ENCODE measurements at regions of chr12 and their contacts with region 1.

Region 1: DNA sequence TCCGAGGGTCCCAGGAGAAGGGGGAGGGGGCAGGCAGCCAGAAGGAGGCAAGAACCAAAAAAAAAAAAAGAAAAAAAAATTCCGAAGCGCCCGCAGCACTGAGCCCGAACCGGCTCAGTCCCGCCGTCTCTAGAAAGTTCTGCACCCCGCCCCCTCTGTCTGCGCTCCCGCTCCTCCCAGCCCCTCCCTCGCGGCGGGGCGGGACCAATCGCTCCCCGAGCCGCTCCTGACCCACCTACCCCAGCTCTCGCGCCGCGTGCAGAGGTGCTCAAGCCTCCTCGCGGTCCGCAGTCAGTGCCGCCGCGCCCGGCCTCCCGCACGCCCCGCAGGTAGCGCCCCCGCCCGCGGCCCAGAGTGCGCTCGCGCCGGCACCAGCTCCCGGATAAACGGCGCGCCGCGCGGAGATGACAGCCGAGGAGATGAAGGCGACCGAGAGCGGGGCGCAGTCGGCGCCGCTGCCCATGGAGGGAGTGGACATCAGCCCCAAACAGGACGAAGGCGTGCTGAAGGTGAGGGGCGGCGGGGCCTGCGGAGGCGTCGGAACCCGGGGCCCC is at the start of gene FKBP4:
- DNase-seq: peak; percentile 71 to 93 (median 87)
- ATAC-seq: peak; percentile 82 to 89
- H3K4me3 Mint-ChIP-seq: peak within 1 kb of the TSS; percentile 84 to 96 (median 91)
- H3K27ac Mint-ChIP-seq: peak within 1 kb of the TSS in 9 of 10 donors; percentile 57 to 93 (median 88)
- H3K4me1 Mint-ChIP-seq: peaks cover 10 to 36% (median 20%) of the 10 kb centered on the region in 4 donors
- H3K27me3 Mint-ChIP-seq: no peaks in the 10 kb centered on the region
- polyA plus RNA-seq, gene FKBP4: 30.3 to 41.5 (median 33.9) TPM

Region 2: DNA sequence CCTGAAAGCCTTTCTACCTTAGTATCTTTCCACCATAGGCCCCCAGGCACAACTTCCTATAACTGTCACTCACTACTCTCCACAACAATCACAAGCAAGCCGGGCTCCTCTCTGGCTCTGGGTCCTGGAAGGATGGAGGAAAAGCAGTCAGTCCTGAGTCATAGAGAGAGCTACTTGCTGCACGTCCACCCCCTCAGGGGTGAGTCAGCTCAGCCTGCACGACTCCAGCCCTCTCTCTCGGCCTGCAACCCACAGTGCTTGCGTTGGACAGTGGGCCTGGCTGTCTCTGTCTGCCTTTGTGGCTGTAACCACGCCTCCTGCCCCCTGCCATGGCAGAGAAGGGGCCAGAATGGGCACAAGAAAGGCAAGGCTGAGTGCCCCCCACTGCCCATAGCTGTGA is 154.1 kb before region 1 on chr12:
- POLR2A ChIA-PET with region 1: no interaction called
- DNase-seq: no peak
- ATAC-seq: no peak
- H3K4me3 Mint-ChIP-seq: no peak overlapping the region
- H3K27ac Mint-ChIP-seq: peak overlapping the region in 1 of 10 donors; percentile 71
- H3K4me1 Mint-ChIP-seq: peaks cover 17 to 43% (median 25%) of the 10 kb centered on the region in 4 donors
- H3K27me3 Mint-ChIP-seq: peaks cover 6 to 33% (median 23%) of the 10 kb centered on the region in 5 donors

Region 3: DNA sequence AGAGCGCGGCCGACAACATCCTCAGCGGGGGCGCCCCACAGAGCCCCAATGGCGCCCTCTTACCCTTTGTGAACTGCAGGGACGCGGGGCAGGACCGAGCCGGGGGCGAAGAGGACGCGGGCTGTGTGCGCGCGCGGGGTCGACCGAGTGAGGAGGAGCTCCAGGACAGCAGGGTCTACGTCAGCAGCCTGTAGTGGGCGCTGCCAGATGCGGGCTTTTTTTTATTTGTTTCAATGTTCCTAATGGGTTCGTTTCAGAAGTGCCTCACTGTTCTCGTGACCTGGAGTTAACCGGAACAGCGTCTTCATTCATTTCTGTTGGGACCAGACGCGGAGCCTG is 103.8 kb before region 1 on chr12:
- POLR2A ChIA-PET with region 1: interaction called, 51 read pairs
- DNase-seq: peak; percentile 32 to 80 (median 60)
- ATAC-seq: peak; percentile 76 to 78
- H3K4me3 Mint-ChIP-seq: peak overlapping the region; percentile 86 to 99 (median 94)
- H3K27ac Mint-ChIP-seq: peak overlapping the region; percentile 81 to 94 (median 90)
- H3K4me1 Mint-ChIP-seq: peaks cover 36 to 55% (median 50%) of the 10 kb centered on the region in 4 donors
- H3K27me3 Mint-ChIP-seq: no peaks in the 10 kb centered on the region

Region 4: DNA sequence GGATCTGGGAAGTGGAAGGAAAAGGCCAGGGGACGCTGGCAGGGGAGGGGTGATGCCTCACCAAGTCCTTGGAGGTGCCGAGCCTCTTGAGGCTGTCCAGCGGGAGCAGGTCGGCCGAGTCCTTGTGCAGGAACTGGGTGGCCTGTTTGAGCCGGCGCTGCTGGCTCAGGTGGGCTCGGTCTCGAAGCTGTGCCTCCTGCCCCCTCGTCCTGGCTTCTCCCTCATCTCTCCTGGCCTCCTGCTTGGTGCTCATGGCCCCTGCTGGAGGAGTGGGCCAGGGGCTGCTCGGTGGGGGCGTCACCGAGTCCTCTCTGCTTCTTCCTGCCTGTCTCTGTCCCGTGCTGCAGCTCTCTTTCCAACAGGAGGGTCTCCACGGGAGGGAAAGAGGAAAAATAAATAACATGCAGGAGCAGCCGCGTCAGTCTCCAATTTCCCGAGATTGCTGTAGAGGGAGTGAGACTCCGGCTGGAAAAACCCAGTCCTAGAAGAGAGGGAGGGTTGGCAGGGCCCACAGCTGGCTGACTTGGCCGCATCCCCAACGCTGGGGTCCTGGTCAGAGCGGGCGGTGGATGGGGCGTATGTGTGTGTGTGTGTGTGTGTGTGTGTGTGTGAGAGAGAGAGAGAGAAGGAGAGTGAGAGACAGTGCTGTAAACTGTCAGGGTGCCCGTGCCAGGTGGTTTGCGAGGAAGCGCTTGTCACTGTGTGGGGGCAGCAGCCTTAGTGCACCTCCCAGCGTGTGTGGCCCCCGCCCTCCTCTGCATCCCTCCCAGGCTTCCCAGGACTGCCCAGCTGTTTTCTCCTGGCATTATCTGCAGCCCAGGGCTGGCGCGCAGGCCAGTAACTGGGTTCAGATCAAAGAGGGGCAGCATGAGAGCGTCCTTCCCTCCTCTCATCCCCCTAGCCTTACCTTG is 40.0 kb after region 1 on chr12 and contains the start of gene NRIP2:
- POLR2A ChIA-PET with region 1: no interaction called
- DNase-seq: no peak
- ATAC-seq: peak in 1 of 2 donors; percentile 35
- H3K4me3 Mint-ChIP-seq: peak within 1 kb of the TSS in 2 of 10 donors; percentile 6 to 50
- H3K27ac Mint-ChIP-seq: peak within 1 kb of the TSS in 9 of 10 donors; percentile 18 to 87 (median 70)
- H3K4me1 Mint-ChIP-seq: peaks cover 9 to 28% (median 21%) of the 10 kb centered on the region in 4 donors
- H3K27me3 Mint-ChIP-seq: no peaks in the 10 kb centered on the region
- polyA plus RNA-seq, gene NRIP2: 1.3 to 2.4 (median 1.6) TPM

Measured in naive thymus-derived CD8-positive, alpha-beta T cell (primary cell).